Naive thymus-derived CD4-positive, alpha-beta T cell (primary cell): ENCODE measurements at regions of chr1 and their contacts with region 1.

Region 1: DNA sequence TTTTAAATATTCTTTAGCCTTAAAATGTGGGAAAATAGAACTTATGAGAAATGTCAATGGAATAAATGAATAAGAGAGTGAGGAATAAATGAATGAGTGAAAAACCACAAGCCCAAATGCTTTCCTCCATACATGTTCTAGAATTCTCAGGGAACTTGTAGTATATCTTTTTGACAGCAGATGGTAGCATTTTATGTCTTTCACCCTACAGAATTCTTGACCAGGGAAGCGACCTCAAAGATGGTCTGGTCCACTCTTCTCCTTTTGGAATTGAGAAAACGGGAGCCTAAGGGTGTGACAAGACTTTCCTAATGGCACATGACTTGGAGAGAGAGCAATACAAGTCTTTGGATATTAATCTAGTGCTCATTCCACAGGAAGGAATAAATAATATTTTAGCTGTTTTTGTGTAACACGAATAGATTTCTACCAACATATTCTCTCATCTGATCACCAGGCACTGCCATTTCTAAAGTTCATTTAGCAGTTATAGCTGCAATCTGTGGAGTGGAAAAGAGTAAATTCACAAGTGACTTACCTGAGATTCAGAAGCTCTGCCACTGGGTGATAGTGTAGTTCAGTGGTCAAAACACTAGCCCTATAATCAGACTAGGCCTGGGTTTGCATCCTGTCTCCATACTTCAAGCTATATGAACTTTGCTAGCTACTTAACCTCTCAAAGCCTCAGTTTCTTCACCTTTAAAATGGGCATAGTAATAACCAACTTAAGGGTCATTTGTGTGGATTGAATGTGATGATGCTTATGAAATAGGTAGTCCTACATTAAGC is 15.0 kb upstream of the F5 start:
- DNase-seq: peak in 6 of 9 donors; percentile 17 to 51 (median 36)
- ATAC-seq: no peak
- H3K4me3 ChIP-seq: no peak overlapping the region
- H3K4me3 Mint-ChIP-seq: peak overlapping the region in 6 of 10 donors; percentile 38 to 79 (median 54)
- H3K27ac ChIP-seq: peak overlapping the region; percentile 61
- H3K27ac Mint-ChIP-seq: peak overlapping the region; percentile 47 to 96 (median 89)
- H3K4me1 ChIP-seq: peaks cover 17 to 49% of the 10 kb centered on the region in 2 donors
- H3K4me1 Mint-ChIP-seq: peaks cover 43 to 58% (median 55%) of the 10 kb centered on the region in 7 donors
- H3K27me3 ChIP-seq: no peaks in the 10 kb centered on the region
- H3K27me3 Mint-ChIP-seq: peaks cover 0 to 2% (median 0%) of the 10 kb centered on the region in 5 donors

Region 2: DNA sequence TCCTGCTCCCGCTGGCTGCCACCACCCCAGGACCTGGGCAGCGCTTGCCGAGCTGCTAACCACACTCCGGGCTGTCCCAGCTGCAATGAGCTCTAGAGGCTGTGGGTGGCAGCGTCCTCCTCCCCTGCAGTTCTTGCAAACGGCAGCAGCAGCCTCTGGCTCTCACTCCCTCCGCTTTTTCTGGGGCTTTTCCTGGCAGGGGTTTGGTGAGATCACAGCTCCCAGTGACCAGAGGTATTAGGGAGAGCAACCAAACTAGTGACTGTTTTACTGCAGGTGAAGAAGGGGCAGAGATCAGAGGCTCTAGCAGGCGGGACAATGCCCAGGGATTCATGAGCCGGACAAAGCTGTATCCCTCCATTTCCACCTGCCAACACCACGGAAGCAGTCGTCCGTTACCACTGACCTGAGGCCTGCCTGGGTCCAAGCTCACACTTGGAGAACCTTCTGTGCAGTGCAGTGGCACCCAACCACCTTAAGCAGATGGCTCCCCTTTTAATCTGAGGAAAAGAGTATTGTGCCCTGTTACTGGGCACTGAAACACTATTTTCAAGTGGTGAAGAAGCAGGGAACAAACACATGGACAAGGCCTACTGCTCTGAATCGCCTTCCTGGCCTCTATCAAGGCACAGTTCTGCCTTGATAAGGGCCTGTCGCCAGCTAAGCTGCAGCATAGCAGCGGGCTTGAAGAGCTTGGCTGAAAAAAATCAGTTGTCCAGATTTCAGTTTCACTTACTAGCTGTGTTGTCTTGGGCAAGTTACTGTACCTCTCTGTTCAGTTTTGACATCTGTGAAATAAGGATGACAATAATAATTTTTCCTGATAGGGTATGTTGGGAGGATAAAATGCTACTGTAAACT is 14.7 kb before region 1 on chr1 and contains the start of gene F5:
- CTCF ChIA-PET with region 1: interaction called, 43 read pairs
- POLR2A ChIA-PET with region 1: interaction called, 8 read pairs
- intact Hi-C with region 1: loop called in 1 of 2 experiments (anchors 1 kb)
- DNase-seq: peak; percentile 53 to 78 (median 74)
- ATAC-seq: peak; percentile 98
- H3K4me3 ChIP-seq: peak within 1 kb of the TSS; percentile 47
- H3K4me3 Mint-ChIP-seq: peak within 1 kb of the TSS; percentile 81 to 93 (median 90)
- H3K27ac ChIP-seq: peak within 1 kb of the TSS; percentile 66
- H3K27ac Mint-ChIP-seq: peak within 1 kb of the TSS; percentile 50 to 94 (median 86)
- H3K4me1 ChIP-seq: peaks cover 10 to 14% of the 10 kb centered on the region in 2 donors
- H3K4me1 Mint-ChIP-seq: peaks cover 18 to 71% (median 53%) of the 10 kb centered on the region in 7 donors
- H3K27me3 ChIP-seq: no peaks in the 10 kb centered on the region
- H3K27me3 Mint-ChIP-seq: peaks cover 0 to 4% (median 0%) of the 10 kb centered on the region in 5 donors
- total RNA-seq, gene F5: 3.7 to 14.6 (median 5.7) TPM

Region 3: DNA sequence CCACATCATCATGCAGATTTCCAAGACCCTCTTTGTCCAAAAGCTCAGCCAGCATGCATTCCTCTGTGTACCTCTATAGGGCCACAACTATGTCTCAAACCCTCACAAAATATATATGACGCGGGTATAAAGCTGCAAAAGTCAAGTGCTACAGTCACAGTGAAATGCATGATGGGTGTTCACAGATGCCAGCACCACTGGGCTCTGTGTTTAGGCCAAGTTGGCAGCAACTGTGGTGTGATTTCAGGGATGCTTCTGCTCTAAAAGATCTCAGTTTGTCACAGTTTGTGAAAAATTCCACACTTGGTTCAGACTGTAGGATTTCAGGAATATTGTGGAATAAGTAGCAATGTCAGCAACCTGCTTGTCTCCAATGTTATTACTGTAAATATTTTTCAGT is 52.6 kb after region 1 on chr1:
- CTCF ChIA-PET with region 1: interaction called, 7 read pairs
- POLR2A ChIA-PET with region 1: interaction called, 5 read pairs
- intact Hi-C with region 1: loop called in 1 of 2 experiments (anchors 2 kb)
- DNase-seq: no peak
- ATAC-seq: no peak
- H3K4me3 ChIP-seq: no peak overlapping the region
- H3K4me3 Mint-ChIP-seq: no peak overlapping the region
- H3K27ac ChIP-seq: no peak overlapping the region
- H3K27ac Mint-ChIP-seq: peak overlapping the region in 2 of 9 donors; percentile 57 to 59
- H3K4me1 ChIP-seq: peaks cover 17 to 26% of the 10 kb centered on the region in 2 donors
- H3K4me1 Mint-ChIP-seq: peaks cover 36 to 69% (median 57%) of the 10 kb centered on the region in 7 donors
- H3K27me3 ChIP-seq: no peaks in the 10 kb centered on the region
- H3K27me3 Mint-ChIP-seq: no peaks in the 10 kb centered on the region

Region 4: GRCh38 chr1:169680377-169681019 is 79.2 kb after region 1 on chr1:
- CTCF ChIA-PET with region 1: interaction called, 15 read pairs
- POLR2A ChIA-PET with region 1: interaction called, 15 read pairs
- intact Hi-C with region 1: no loop called
- DNase-seq: peak in 1 of 9 donors; percentile 38
- ATAC-seq: peak; percentile 49
- H3K4me3 ChIP-seq: no peak overlapping the region
- H3K4me3 Mint-ChIP-seq: peak overlapping the region; percentile 23 to 72 (median 53)
- H3K27ac ChIP-seq: no peak overlapping the region
- H3K27ac Mint-ChIP-seq: peak overlapping the region in 7 of 9 donors; percentile 40 to 89 (median 73)
- H3K4me1 ChIP-seq: peaks cover 24 to 72% of the 10 kb centered on the region in 2 donors
- H3K4me1 Mint-ChIP-seq: peaks cover 28 to 64% (median 39%) of the 10 kb centered on the region in 7 donors
- H3K27me3 ChIP-seq: no peaks in the 10 kb centered on the region
- H3K27me3 Mint-ChIP-seq: no peaks in the 10 kb centered on the region

Region 5: GRCh38 chr1:169699711-169700110 is 98.4 kb after region 1 on chr1:
- CTCF ChIA-PET with region 1: interaction called, 229 read pairs
- POLR2A ChIA-PET with region 1: interaction called, 159 read pairs
- intact Hi-C with region 1: loop called (anchors 1 kb)
- DNase-seq: no peak
- ATAC-seq: no peak
- H3K4me3 ChIP-seq: no peak overlapping the region
- H3K4me3 Mint-ChIP-seq: peak overlapping the region in 9 of 10 donors; percentile 51 to 99 (median 54)
- H3K27ac ChIP-seq: peak overlapping the region; percentile 70
- H3K27ac Mint-ChIP-seq: peak overlapping the region in 6 of 9 donors; percentile 52 to 97 (median 88)
- H3K4me1 ChIP-seq: peaks cover 94 to 99% of the 10 kb centered on the region in 2 donors
- H3K4me1 Mint-ChIP-seq: peaks cover 46 to 98% (median 90%) of the 10 kb centered on the region in 7 donors
- H3K27me3 ChIP-seq: no peaks in the 10 kb centered on the region
- H3K27me3 Mint-ChIP-seq: no peaks in the 10 kb centered on the region

Region 6: DNA sequence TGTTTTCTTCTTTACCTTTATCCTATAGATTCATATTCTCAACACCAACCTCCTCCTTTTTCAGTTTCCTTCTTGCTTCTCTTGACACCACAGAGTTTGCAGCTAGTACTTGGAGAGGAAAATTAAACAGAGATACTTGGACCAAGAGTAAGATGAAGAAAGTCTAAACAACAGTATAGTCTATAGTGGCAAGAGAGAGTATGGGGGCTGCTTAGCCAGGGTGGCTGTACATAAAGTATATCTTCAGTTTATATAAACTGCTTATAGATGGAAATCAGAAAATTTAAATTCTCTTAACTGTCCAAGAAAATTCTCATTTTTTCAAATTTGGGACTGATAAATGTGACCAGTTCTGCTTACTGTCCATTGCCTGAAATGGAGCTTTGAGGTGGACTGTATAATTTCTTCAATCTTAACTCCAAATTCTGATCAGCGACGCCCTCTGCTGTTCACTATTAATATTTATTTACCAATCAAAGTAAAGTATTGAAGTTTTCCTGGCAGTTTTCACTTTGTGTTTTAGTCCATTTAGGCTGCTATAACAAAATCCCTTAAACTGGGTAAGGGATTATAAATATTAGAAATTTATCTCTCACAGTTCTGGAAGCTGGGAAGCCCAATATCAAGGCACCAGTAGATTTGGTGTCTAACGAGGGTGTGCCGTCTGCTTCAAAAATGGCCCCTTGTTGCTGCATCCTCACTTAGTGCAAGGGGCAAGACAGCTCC is 208.2 kb after region 1 on chr1:
- CTCF ChIA-PET with region 1: interaction called, 15 read pairs
- POLR2A ChIA-PET with region 1: no interaction called
- intact Hi-C with region 1: loop called in 1 of 2 experiments (anchors 1 kb)
- DNase-seq: peak in 6 of 9 donors; percentile 3 to 44 (median 33)
- ATAC-seq: peak; percentile 65
- H3K4me3 ChIP-seq: no peak overlapping the region
- H3K4me3 Mint-ChIP-seq: no peak overlapping the region
- H3K27ac ChIP-seq: no peak overlapping the region
- H3K27ac Mint-ChIP-seq: no peak overlapping the region
- H3K4me1 ChIP-seq: no peaks in the 10 kb centered on the region
- H3K4me1 Mint-ChIP-seq: peaks cover 0 to 16% (median 0%) of the 10 kb centered on the region in 7 donors
- H3K27me3 ChIP-seq: no peaks in the 10 kb centered on the region
- H3K27me3 Mint-ChIP-seq: no peaks in the 10 kb centered on the region

Region 7: DNA sequence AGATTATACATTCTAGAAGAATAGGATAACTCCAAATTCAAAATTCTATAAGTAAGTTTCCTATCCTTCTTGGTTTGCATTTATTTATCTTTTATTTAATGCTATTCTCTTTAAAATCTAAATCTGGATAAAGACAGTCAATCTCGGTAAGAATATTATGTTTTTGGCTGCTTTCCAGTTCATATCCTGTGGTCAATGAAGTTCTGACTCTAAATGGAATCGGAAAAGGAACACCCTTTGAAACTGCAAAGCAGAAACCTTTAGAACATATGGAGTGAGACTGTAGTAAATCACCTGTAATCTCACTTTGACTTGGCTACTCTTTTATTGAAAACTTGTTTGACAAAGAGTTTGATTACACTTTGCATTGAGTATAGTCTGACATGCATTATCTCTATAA is 388.0 kb after region 1 on chr1:
- CTCF ChIA-PET with region 1: no interaction called
- POLR2A ChIA-PET with region 1: no interaction called
- intact Hi-C with region 1: no loop called
- DNase-seq: no peak
- ATAC-seq: no peak
- H3K4me3 ChIP-seq: no peak overlapping the region
- H3K4me3 Mint-ChIP-seq: no peak overlapping the region
- H3K27ac ChIP-seq: no peak overlapping the region
- H3K27ac Mint-ChIP-seq: no peak overlapping the region
- H3K4me1 ChIP-seq: no peaks in the 10 kb centered on the region
- H3K4me1 Mint-ChIP-seq: no peaks in the 10 kb centered on the region
- H3K27me3 ChIP-seq: no peaks in the 10 kb centered on the region
- H3K27me3 Mint-ChIP-seq: no peaks in the 10 kb centered on the region